Cardiac septum (tissue), 1 donor: ENCODE measurements at regions of chr7 and their contacts with region 1.

Region 1: GRCh38 chr7:117119192-117119924 is 166.1 kb downstream of the ST7 start:
- DNase-seq: peak; percentile 80

Region 2: GRCh38 chr7:116929914-116930913 is 189.1 kb before region 1 on chr7:
- intact Hi-C with region 1: loop called (anchors 2 kb)
- DNase-seq: peak; percentile 90

Region 3: GRCh38 chr7:116984917-116985316 is 134.4 kb before region 1 on chr7:
- intact Hi-C with region 1: loop called (anchors 2 kb)
- DNase-seq: no peak

Region 4: DNA sequence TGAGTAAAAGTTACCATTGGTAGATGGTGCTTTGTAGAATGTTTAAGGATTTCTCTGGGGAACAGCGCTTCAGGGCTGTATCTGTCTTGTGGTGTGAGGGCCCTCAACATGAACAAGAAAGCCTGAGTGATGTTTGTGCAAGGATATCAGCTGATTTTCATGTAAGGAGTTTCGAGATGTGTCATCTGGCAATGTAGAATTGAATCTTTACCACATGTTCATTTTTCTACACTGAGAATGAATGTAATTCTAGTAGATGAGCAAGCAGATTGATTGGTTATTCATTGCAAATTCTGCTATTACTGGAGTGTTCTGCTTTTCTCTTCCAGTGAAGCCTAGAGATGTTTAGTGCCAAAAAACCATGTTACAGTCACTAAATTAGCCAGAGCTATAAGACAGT is 78.4 kb before region 1 on chr7:
- intact Hi-C with region 1: loop called (anchors 10 kb)
- DNase-seq: no peak